ENCODE measurements at regions of chr9 and their contacts with region 1.

Region 1: DNA sequence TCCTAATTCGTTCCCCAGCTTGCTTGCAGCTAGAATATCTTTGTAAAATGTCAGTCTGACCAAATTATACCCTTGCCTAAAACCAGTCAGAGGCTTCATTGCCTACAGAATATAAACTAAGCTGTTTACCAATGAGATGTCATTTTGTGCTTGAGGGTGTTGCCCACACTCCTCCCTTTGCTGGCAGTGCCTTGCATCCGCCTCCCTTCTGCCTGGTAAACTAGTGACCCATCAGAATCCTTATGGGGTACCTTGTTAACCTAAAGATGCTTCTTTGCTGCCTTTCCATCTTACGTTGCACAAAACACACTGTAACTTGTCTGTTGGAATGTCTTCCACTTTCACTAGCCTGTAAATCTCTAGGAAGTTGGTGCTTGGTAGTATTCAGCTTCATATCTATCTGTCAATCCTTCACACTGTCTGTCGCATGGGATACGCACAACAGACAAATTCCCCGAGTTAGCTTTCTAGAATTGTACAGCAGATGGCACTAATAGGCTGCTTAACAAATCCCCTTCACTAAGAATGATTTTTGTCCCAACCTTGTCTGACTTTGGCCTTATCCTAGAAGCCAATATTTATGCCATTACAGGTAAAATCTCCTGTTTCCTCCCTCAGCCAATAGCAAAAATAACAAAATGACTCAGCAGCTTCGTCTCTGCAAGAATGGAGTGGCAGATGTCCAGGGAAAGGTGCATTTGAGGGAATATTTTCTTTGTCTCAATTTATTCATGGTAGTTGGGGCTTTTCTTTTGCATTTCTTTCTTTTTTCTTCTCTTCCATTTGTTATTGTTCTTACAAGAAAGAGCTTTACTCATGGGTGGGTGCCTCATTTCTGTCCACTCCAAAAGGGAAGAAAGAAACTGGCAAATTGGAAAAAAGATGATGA is 3.0 kb downstream of the NUDT2 start:
- DNase-seq: no peak

Region 2: DNA sequence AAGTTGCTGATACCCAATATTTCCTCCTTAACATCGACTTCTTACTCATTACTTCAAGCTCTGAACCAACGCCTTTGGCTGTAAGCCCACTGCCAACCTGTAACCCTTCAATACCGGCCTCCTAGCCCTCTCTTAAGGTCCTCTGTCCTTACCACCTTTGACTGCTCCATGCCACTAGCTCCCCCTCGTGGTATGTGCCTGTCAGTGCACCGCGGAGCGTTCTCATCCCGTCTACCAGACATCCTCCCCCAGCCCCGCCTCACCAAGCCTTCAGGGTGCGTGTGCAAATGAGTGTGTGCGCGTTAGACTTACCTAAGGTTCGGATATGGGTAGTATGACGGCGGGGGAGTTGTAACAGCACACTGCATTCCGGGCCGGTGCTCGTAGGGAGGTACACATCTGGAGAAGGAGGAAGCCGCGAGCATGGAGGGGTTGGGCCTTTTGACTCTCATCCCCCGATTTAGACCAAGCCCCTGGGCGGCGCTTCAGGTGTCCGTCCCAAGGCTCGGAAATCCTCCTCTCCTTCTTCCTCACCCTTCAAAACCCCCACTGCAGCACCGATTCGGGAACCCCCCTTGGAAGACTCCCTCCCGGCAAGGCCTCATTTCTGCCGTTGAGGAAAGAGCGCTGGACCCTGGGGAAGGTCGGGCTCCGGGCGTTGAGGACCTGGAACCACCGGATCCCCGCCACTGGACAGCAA is 47.2 kb after region 1 on chr9:
- intact Hi-C with region 1: loop called (anchors 1 kb)
- DNase-seq: peak; percentile 95

Region 3: GRCh38 chr9:34576597-34577399 is 244.5 kb after region 1 on chr9:
- intact Hi-C with region 1: no loop called
- DNase-seq: no peak

Measured in cardiac septum (tissue), 1 donor.